ENCODE measurements at regions of chr10 and their contacts with region 1.

Region 1: DNA sequence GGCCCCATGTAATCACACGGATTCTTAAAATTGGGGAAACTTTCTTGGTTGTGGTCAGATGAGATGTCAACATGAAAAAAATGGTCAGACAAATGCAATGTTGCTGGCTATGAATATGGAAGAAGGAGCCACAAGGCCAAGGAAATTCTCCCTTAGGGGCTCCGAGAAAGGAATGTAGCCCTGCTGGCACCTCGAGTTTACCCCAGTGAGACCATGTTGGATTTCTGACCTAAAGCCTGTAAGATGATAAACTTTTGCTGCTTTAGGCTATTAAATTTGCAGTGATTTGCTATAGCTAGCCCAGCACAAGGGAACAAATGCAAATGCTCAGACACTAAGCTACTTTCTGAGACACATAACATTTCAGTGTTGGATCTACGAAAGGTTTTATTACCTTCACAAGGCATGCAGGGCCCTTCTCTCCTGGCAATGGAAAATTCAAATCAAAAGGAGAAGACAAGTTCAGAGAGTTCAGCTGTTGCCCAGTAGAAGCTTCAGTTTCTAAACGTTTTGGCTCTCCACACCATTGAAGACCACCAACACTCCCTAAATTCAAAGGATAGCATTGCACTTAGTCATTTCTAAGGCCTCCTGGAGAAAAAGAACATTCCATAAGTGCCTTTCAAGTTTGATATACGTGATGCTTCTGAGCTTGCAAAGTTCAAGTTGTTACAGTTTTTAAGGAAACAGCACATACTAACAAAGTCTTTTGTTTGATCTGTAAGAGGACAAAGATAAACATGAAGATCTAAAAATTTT is 23.4 kb downstream of the MCMBP start:
- DNase-seq: no peak
- H3K4me3 ChIP-seq: no peak overlapping the region
- H3K27ac ChIP-seq: peak overlapping the region; percentile 43
- H3K4me1 ChIP-seq: peaks cover 13% of the 10 kb centered on the region
- H3K27me3 ChIP-seq: no peaks in the 10 kb centered on the region
- CTCF ChIP-seq: no peak

Region 2: GRCh38 chr10:119769886-119770285 is 79.3 kb before region 1 on chr10:
- CTCF ChIA-PET with region 1: no interaction called
- dilution Hi-C with region 1: loop called (anchors 5 kb)
- in situ Hi-C with region 1: no loop called
- intact Hi-C with region 1: no loop called
- DNase-seq: peak; percentile 81
- H3K4me3 ChIP-seq: peak overlapping the region in 1 of 3 experiments; percentile 24
- H3K27ac ChIP-seq: peak overlapping the region; percentile 62
- H3K4me1 ChIP-seq: peaks cover 32% of the 10 kb centered on the region
- H3K27me3 ChIP-seq: no peaks in the 10 kb centered on the region
- CTCF ChIP-seq: no peak

Region 3: GRCh38 chr10:119860866-119861607 is 11.8 kb after region 1 on chr10:
- CTCF ChIA-PET with region 1: no interaction called
- dilution Hi-C with region 1: no loop called
- in situ Hi-C with region 1: no loop called
- intact Hi-C with region 1: no loop called
- DNase-seq: no peak
- H3K4me3 ChIP-seq: no peak overlapping the region
- H3K27ac ChIP-seq: no peak overlapping the region
- H3K4me1 ChIP-seq: no peaks in the 10 kb centered on the region
- H3K27me3 ChIP-seq: no peaks in the 10 kb centered on the region
- CTCF ChIP-seq: no peak

Region 4: DNA sequence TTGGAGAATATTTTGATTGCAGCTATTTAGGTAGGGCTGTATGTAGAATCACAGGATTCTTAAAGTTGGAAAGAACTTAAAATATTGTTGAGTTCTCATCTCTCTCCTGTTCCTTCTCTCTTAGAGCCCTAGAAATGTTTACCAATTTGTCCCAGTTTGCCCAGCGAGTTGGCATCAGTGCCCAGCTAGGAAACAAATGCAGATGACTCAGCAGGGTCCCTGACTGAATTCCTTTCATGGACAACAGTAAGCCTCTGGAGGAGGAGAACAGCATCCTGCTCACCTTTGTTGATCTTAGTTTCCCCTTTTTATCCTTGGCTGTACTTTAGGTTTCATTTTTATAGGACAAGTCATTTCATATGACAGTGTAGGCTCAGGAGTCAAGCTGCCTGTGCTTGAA is 132.6 kb after region 1 on chr10:
- CTCF ChIA-PET with region 1: no interaction called
- dilution Hi-C with region 1: no loop called
- in situ Hi-C with region 1: no loop called
- intact Hi-C with region 1: no loop called
- DNase-seq: no peak
- H3K4me3 ChIP-seq: no peak overlapping the region
- H3K27ac ChIP-seq: no peak overlapping the region
- H3K4me1 ChIP-seq: no peaks in the 10 kb centered on the region
- H3K27me3 ChIP-seq: no peaks in the 10 kb centered on the region
- CTCF ChIP-seq: no peak